CD4-positive, alpha-beta T cell (primary cell): ENCODE measurements at regions of chr12 and their contacts with region 1.

Region 1: GRCh38 chr12:50117057-50117622 is 5.1 kb downstream of the COX14 start:
- DNase-seq: no peak
- ATAC-seq: no peak
- H3K4me3 ChIP-seq: no peak overlapping the region
- H3K4me3 Mint-ChIP-seq: no peak overlapping the region
- H3K27ac ChIP-seq: no peak overlapping the region
- H3K27ac Mint-ChIP-seq: no peak overlapping the region
- H3K4me1 ChIP-seq: peaks cover 58% of the 10 kb centered on the region
- H3K4me1 Mint-ChIP-seq: peaks cover 51% of the 10 kb centered on the region
- H3K27me3 ChIP-seq: no peaks in the 10 kb centered on the region
- H3K27me3 Mint-ChIP-seq: no peaks in the 10 kb centered on the region
- CTCF ChIP-seq: no peak

Region 2: DNA sequence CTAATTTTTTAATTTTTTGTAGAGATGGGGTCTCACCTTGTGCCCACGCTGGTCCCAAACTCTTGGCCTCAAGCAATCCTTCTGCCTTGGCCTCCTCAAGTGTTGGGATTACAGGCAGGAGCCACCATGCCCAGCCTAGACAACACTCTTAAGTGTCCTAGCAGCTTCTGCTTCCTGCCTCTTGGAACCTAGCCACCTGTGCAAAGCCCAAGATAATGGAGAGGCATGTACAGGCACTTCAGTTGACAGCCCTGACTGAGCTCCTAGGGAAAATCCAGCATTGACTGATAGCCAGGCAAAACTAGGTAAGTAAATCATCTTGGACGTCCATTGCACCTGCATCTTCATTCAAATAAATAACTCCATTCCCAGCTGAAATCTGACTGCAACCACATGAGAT is 10.4 kb after region 1 on chr12:
- CTCF ChIA-PET with region 1: interaction called, 28 read pairs
- POLR2A ChIA-PET with region 1: interaction called, 39 read pairs
- intact Hi-C with region 1: loop called (anchors 1 kb)
- DNase-seq: no peak
- ATAC-seq: no peak
- H3K4me3 ChIP-seq: no peak overlapping the region
- H3K4me3 Mint-ChIP-seq: no peak overlapping the region
- H3K27ac ChIP-seq: no peak overlapping the region
- H3K27ac Mint-ChIP-seq: no peak overlapping the region
- H3K4me1 ChIP-seq: peaks cover 4% of the 10 kb centered on the region
- H3K4me1 Mint-ChIP-seq: peaks cover 33% of the 10 kb centered on the region
- H3K27me3 ChIP-seq: no peaks in the 10 kb centered on the region
- H3K27me3 Mint-ChIP-seq: no peaks in the 10 kb centered on the region
- CTCF ChIP-seq: no peak

Region 3: GRCh38 chr12:50201978-50202521 is 84.9 kb after region 1 on chr12:
- CTCF ChIA-PET with region 1: no interaction called
- POLR2A ChIA-PET with region 1: no interaction called
- intact Hi-C with region 1: no loop called
- DNase-seq: no peak
- ATAC-seq: no peak
- H3K4me3 ChIP-seq: no peak overlapping the region
- H3K4me3 Mint-ChIP-seq: no peak overlapping the region
- H3K27ac ChIP-seq: no peak overlapping the region
- H3K27ac Mint-ChIP-seq: no peak overlapping the region
- H3K4me1 ChIP-seq: no peaks in the 10 kb centered on the region
- H3K4me1 Mint-ChIP-seq: no peaks in the 10 kb centered on the region
- H3K27me3 ChIP-seq: no peaks in the 10 kb centered on the region
- H3K27me3 Mint-ChIP-seq: no peaks in the 10 kb centered on the region
- CTCF ChIP-seq: no peak